WTC11 (cell line): ENCODE measurements at regions of chr3 and their contacts with region 1.

Region 1: GRCh38 chr3:8769088-8769822 is at the start of gene OXTR:
- DNase-seq: peak; percentile 88
- ATAC-seq: peak; percentile 91
- H3K4me3 Mint-ChIP-seq: peak within 1 kb of the TSS; percentile 72
- H3K27ac Mint-ChIP-seq: no peak within 1 kb of the TSS
- H3K4me1 Mint-ChIP-seq: peaks cover 38% of the 10 kb centered on the region
- H3K27me3 Mint-ChIP-seq: peaks cover 54% of the 10 kb centered on the region
- CTCF ChIP-seq: peak; percentile 100
- total RNA-seq, gene OXTR: 1.6 to 3.6 TPM (median 1.7 TPM) in 3 replicates

Region 2: GRCh38 chr3:8663177-8664061 is 105.8 kb before region 1 on chr3:
- CTCF ChIA-PET with region 1: interaction called, 13 read pairs
- POLR2A ChIA-PET with region 1: no interaction called
- DNase-seq: peak; percentile 95
- ATAC-seq: peak; percentile 92
- H3K4me3 Mint-ChIP-seq: no peak overlapping the region
- H3K27ac Mint-ChIP-seq: no peak overlapping the region
- H3K4me1 Mint-ChIP-seq: peaks cover 9% of the 10 kb centered on the region
- H3K27me3 Mint-ChIP-seq: peaks cover 52% of the 10 kb centered on the region
- CTCF ChIP-seq: peak; percentile 70

Region 3: DNA sequence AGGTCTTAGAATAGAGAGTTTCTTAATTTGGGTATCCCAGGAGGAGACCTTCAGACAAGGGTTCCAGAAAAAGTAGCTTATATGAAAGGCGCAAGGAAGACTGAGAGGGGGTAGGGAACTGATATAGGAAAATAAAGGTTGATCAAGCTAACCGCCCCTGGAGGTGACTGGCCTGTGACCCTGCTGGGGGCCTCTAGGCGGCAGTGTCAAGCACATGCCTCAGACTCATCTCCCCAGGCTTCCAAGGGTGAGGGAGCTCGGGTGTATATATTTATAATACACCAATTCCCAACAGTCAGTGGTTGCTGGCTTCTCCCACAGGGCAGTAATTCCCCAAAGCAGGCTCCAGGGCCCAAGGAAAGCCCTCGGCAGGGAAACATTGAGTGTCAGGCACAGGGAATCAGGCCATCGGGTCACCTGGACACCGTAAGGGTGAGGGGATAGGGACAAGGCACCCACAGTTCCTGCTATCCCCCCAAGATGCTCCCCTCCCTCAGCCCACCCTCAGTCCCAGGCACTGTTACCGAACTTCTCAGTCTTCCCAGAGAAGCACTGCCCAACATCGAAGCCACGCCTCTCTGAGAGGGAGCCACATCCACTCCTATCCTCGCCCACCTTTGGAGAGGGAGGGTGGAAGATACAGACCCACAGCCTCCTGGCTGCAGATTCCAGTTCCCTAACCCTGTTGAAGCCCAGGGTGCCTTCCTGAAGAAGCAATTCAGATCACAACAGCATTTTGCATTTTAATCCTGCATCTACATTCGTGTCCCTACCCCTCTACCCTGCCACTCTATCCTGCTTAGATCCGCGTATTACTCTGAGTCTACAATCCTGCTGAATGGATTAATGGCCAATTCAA is 55.1 kb before region 1 on chr3:
- CTCF ChIA-PET with region 1: interaction called, 33 read pairs
- POLR2A ChIA-PET with region 1: no interaction called
- DNase-seq: peak; percentile 72
- ATAC-seq: peak; percentile 91
- H3K4me3 Mint-ChIP-seq: no peak overlapping the region
- H3K27ac Mint-ChIP-seq: no peak overlapping the region
- H3K4me1 Mint-ChIP-seq: peaks cover 12% of the 10 kb centered on the region
- H3K27me3 Mint-ChIP-seq: peaks cover 100% of the 10 kb centered on the region
- CTCF ChIP-seq: peak; percentile 47; the same call in 1 of the 2 replicates

Region 4: GRCh38 chr3:8741581-8742261 is 27.5 kb before region 1 on chr3:
- CTCF ChIA-PET with region 1: interaction called, 40 read pairs
- POLR2A ChIA-PET with region 1: no interaction called
- DNase-seq: peak; percentile 58
- ATAC-seq: peak; percentile 90
- H3K4me3 Mint-ChIP-seq: peak overlapping the region; percentile 52
- H3K27ac Mint-ChIP-seq: peak overlapping the region; percentile 61; the same call in 1 of the 2 replicates
- H3K4me1 Mint-ChIP-seq: peaks cover 33% of the 10 kb centered on the region
- H3K27me3 Mint-ChIP-seq: peaks cover 13% of the 10 kb centered on the region
- CTCF ChIP-seq: no peak

Region 5: GRCh38 chr3:8755563-8756237 is 13.6 kb before region 1 on chr3:
- CTCF ChIA-PET with region 1: interaction called, 52 read pairs
- POLR2A ChIA-PET with region 1: no interaction called
- DNase-seq: no peak
- ATAC-seq: peak; percentile 63
- H3K4me3 Mint-ChIP-seq: no peak overlapping the region
- H3K27ac Mint-ChIP-seq: no peak overlapping the region
- H3K4me1 Mint-ChIP-seq: no peaks in the 10 kb centered on the region; the same call in 1 of the 2 replicates
- H3K27me3 Mint-ChIP-seq: no peaks in the 10 kb centered on the region; the same call in 1 of the 2 replicates
- CTCF ChIP-seq: peak; percentile 14; the same call in 1 of the 2 replicates

Region 6: DNA sequence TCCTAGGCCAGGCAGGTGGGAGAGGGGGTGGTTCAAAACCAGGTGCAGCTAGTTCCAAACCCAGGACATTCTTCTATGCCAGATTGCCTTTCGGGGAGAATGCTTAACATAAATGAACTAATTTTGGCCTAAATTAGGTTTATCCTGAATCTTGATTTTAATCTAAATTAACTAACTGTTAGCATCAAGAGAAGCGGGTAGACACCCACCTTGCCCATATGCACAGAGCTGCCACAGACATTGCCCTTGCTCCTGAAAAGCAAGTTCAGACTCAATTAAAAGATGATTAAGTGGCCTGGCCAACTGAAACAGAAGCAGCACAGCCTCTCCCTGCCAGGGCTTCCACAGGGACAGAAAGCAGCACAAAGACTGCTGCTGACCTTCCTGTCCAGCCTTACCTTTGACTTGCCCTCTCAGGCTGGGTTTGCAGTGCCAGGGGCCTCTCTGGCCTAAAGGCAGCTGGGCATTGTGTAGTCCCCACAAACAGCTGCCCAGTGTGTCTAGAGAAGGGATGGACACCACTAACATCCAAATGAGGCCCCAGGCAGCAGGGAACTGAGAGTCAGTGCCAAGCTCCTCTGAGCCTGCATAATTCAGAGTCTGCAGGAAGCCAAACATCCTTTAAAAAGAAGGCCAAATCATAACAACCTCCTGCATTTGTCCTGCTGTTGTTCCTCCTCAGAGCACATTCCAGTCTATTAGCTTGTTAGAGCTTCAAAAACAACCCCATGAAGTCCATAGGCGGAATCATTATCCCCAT is 15.6 kb after region 1 on chr3:
- CTCF ChIA-PET with region 1: interaction called, 23 read pairs
- POLR2A ChIA-PET with region 1: no interaction called
- DNase-seq: no peak
- ATAC-seq: peak; percentile 48; the same call in 1 of the 2 replicates
- H3K4me3 Mint-ChIP-seq: no peak overlapping the region
- H3K27ac Mint-ChIP-seq: no peak overlapping the region
- H3K4me1 Mint-ChIP-seq: no peaks in the 10 kb centered on the region; the same call in 1 of the 2 replicates
- H3K27me3 Mint-ChIP-seq: no peaks in the 10 kb centered on the region
- CTCF ChIP-seq: no peak

Region 7: DNA sequence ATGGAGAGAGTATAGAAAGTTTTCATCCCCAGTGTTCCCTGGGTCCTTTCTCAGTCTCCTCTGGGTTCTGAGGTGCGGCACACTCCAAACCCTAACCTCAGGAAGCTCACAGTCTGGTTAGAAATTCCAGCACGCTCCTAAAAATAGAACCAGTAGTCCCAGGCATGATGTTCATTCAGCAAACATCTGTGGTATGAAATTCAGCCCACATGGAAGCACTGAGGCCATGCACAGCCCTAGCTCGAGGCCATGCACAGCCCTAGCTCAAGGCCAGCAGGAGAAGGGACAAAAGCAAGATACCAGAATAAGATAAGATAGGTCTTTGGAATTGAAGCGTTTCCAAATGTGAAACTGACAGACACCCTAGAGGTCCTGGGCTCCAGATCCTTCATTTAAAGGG is 82.5 kb after region 1 on chr3:
- CTCF ChIA-PET with region 1: interaction called, 12 read pairs
- POLR2A ChIA-PET with region 1: no interaction called
- DNase-seq: no peak
- ATAC-seq: no peak
- H3K4me3 Mint-ChIP-seq: no peak overlapping the region
- H3K27ac Mint-ChIP-seq: no peak overlapping the region
- H3K4me1 Mint-ChIP-seq: peaks cover 6% of the 10 kb centered on the region
- H3K27me3 Mint-ChIP-seq: no peaks in the 10 kb centered on the region
- CTCF ChIP-seq: no peak